PC-3 (cell line): ENCODE measurements at regions of chr15 and their contacts with region 1.

Region 1: GRCh38 chr15:97903971-97904572 is 56.4 kb upstream of the ARRDC4 start:
- DNase-seq: peak; percentile 62
- ATAC-seq: peak; percentile 61
- H3K4me3 ChIP-seq: no peak overlapping the region
- H3K27ac ChIP-seq: no peak overlapping the region
- H3K4me1 ChIP-seq: no peaks in the 10 kb centered on the region
- H3K27me3 ChIP-seq: peaks cover 59% of the 10 kb centered on the region
- CTCF ChIP-seq: peak; percentile 66

Region 2: DNA sequence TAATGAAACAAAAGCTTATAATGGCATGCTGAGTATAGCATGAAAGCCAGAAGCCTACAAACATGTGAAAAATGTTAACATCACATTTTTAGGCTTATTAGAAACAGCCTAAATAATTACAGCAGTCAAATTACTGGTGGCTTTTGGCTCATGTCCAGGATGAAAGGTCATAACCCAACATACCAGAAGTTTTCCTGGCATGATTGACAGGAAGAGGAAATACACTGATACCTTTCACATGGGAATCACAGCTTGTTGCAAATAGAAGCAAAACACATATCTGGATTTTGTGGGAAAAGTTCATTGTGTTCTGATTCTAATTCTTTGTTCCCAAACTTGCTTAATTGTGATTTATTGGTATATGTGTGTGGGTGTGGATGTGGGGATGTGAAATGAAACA is 337.1 kb before region 1 on chr15:
- CTCF ChIA-PET with region 1: no interaction called
- POLR2A ChIA-PET with region 1: no interaction called
- intact Hi-C with region 1: no loop called
- DNase-seq: no peak
- ATAC-seq: no peak
- H3K4me3 ChIP-seq: no peak overlapping the region
- H3K27ac ChIP-seq: no peak overlapping the region
- H3K4me1 ChIP-seq: no peaks in the 10 kb centered on the region
- H3K27me3 ChIP-seq: no peaks in the 10 kb centered on the region
- CTCF ChIP-seq: no peak

Region 3: GRCh38 chr15:97692301-97693015 is 211.6 kb before region 1 on chr15:
- CTCF ChIA-PET with region 1: no interaction called
- POLR2A ChIA-PET with region 1: no interaction called
- intact Hi-C with region 1: no loop called
- DNase-seq: no peak
- ATAC-seq: no peak
- H3K4me3 ChIP-seq: no peak overlapping the region
- H3K27ac ChIP-seq: no peak overlapping the region
- H3K4me1 ChIP-seq: no peaks in the 10 kb centered on the region
- H3K27me3 ChIP-seq: no peaks in the 10 kb centered on the region
- CTCF ChIP-seq: no peak

Region 4: DNA sequence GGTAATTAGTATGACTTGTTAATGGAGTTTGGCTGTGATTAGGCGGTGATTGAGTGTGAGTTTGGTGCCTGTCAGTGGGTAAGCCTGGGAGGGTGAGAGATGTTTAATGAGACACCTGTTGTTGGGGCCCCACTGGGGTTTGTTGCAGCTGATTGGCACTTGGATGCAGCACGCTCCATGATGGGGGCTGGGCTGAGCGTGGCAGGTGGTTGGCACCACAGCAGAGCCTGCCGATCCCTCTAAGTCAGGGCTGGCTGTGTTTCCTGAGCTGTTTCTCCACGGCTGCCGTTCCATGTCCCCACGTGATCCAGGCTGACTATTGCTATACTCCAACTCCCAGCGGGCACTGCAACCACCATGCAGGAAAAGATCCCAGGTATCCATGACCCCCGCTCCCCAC is 37.1 kb before region 1 on chr15:
- CTCF ChIA-PET with region 1: no interaction called
- POLR2A ChIA-PET with region 1: no interaction called
- intact Hi-C with region 1: no loop called
- DNase-seq: no peak
- ATAC-seq: no peak
- H3K4me3 ChIP-seq: no peak overlapping the region
- H3K27ac ChIP-seq: no peak overlapping the region
- H3K4me1 ChIP-seq: no peaks in the 10 kb centered on the region
- H3K27me3 ChIP-seq: peaks cover 15% of the 10 kb centered on the region; the same call in 1 of the 2 replicates
- CTCF ChIP-seq: no peak

Region 5: DNA sequence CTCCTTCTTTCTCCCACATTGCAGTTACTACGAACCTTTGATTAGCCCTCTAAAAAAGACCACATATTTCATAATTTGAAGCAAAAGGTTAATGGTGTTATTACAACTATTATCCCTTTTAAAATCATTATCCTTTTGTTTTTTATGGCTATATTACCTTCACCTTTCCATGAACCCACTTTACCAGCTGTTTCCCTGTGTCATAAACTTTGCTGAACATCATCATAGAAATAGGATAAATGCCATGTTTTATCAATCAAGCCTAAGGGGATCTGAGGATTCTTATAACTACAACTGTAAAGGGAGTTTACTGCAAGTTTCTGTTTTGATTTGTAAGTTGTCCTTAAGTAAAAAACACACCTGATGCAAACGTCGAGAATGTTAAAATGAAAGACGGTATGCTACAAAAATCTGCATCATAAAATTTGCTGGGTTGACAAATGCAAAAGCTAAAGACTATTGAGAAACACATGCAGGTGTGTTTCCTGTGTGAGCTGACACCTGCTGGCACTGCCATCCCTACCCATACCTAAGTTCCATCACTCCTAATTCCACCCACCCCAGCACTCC is 17.3 kb after region 1 on chr15:
- CTCF ChIA-PET with region 1: no interaction called
- POLR2A ChIA-PET with region 1: no interaction called
- intact Hi-C with region 1: no loop called
- DNase-seq: no peak
- ATAC-seq: no peak
- H3K4me3 ChIP-seq: no peak overlapping the region
- H3K27ac ChIP-seq: no peak overlapping the region
- H3K4me1 ChIP-seq: no peaks in the 10 kb centered on the region
- H3K27me3 ChIP-seq: peaks cover 52% of the 10 kb centered on the region
- CTCF ChIP-seq: no peak

Region 6: DNA sequence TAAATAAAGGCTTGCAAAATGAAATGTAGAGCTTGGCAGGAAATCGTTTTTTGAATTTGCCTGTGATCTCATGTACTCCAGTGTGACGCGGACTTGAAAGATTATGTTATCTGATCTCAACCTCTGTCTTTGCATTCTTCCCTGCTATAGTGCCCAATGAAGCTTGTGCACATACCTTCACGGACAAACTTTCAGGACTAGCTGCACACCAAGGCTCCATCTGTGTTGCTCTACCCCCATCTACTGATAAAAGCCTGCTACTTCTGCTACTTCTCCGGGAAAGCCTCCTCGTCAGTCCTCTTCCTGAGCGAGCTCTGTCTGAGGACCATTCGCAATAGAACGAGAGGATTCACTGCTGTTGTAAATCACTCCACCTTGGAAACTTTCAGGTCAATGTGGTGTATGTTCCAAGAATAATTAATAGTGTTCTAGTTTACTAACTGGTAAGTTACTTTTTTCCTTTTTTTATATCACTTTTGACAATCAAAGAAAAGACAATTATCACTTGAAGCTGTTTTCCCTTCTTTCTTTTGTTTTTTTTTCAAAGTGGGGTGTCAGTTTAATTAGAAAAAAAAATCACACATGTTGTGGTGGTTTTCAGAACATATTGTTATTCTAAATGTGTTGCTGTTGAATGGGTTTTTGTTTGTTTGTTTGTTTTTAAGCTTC is 274.0 kb after region 1 on chr15:
- CTCF ChIA-PET with region 1: interaction called, 7 read pairs
- POLR2A ChIA-PET with region 1: no interaction called
- intact Hi-C with region 1: loop called (anchors 2 kb)
- DNase-seq: peak; percentile 74
- ATAC-seq: peak; percentile 71
- H3K4me3 ChIP-seq: no peak overlapping the region
- H3K27ac ChIP-seq: no peak overlapping the region
- H3K4me1 ChIP-seq: no peaks in the 10 kb centered on the region
- H3K27me3 ChIP-seq: peaks cover 54% of the 10 kb centered on the region
- CTCF ChIP-seq: peak; percentile 73